ENCODE measurements at regions of chr10 and their contacts with region 1.

Region 1: DNA sequence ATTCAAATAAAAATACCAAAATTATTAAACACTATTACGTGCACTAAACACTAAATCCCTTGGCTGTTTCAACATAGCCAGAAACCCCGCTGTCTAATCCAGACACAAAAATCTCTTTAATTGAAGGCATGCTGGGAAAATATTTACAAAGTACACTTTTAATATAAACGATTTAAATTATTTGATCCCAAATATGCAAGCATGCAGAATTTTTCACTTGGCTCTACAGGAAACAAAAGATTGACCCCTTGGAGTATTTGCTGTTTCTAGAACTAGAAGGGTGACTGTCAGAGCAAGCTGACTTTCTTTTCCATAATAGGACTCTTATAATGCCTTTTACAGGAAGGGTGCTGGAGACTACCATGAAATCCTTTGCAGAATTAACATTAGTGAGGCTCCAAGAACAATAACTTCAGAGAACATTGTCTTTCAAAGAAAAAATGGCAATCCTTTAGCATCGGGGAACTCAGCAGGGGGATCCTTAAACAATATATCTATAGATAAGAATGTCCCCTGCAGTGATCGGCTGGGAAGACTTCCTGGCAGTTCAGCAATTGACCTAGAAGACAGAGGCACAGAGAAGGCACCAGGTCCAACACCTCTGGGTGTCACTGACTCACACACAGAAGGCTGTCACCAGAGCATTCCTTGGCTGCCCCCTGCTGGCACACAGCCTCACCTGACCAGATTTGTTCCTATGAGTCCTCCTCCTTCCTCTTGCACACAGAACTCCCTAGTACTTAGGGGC is 55.8 kb upstream of the MRLN start:
- DNase-seq: peak; percentile 90
- H3K4me3 ChIP-seq: no peak overlapping the region
- H3K27ac ChIP-seq: no peak overlapping the region
- H3K4me1 ChIP-seq: no peaks in the 10 kb centered on the region
- H3K27me3 ChIP-seq: no peaks in the 10 kb centered on the region
- CTCF ChIP-seq: peak; percentile 78

Region 2: DNA sequence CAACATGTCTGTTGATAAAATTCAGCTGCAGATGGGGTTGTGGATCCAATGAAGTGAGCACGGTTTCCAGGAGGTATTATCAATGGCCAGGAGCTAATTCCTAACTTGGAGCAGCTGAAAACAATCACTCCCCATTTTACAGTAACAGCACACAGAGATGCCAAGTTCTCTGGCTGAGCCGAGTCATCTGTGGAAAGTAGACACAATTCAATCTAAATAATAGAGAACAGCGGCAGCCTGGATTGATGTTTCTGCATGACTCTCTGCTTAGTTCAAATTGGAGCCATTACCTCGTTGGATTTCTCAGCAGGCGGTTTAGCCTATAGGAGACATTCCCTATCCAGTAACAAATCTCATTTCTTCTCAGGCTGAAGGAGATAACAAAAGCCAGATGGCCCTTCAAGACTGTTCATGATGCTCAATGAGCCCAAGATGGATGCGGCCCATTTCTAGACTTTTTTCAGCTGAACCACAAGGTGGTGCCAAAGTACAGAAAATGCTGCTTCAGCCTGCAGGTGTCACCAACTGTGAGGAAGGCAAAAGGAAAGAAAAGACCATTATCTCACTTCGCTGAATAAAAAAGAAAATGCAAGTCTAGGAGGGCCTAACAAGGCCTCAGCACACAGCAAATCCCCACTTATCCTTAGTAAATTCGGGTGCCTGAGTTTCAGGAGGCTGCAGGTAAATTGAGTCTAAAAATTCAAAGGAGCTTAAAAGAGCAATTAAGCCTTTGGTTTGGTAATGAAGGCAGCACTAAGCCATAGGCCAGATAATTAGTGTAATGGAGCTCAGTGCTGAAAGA is 183.1 kb before region 1 on chr10:
- intact Hi-C with region 1: loop called (anchors 5 kb)
- DNase-seq: peak; percentile 37
- H3K4me3 ChIP-seq: no peak overlapping the region
- H3K27ac ChIP-seq: no peak overlapping the region
- H3K4me1 ChIP-seq: peaks cover 4% of the 10 kb centered on the region
- H3K27me3 ChIP-seq: no peaks in the 10 kb centered on the region
- CTCF ChIP-seq: peak; percentile 68

Region 3: GRCh38 chr10:60827791-60828488 is 1018.9 kb after region 1 on chr10:
- intact Hi-C with region 1: no loop called
- DNase-seq: no peak
- H3K4me3 ChIP-seq: no peak overlapping the region
- H3K27ac ChIP-seq: no peak overlapping the region
- H3K4me1 ChIP-seq: no peaks in the 10 kb centered on the region
- H3K27me3 ChIP-seq: no peaks in the 10 kb centered on the region
- CTCF ChIP-seq: no peak

Measured in colonic mucosa (tissue), 4 donors.